CD4-positive, alpha-beta T cell (primary cell): ENCODE measurements at regions of chr1 and their contacts with region 1.

Region 1: GRCh38 chr1:28329395-28330153 is 734 bp downstream of the MED18 start:
- DNase-seq: peak in 10 of 14 experiments; percentile 17 to 73 (median 36)
- ATAC-seq: peak; percentile 21
- H3K4me3 ChIP-seq: peak overlapping the region; percentile 67
- H3K4me3 Mint-ChIP-seq: peak overlapping the region; percentile 94
- H3K27ac ChIP-seq: peak overlapping the region; percentile 90 to 93
- H3K27ac Mint-ChIP-seq: peak overlapping the region; percentile 88
- H3K4me1 ChIP-seq: peaks cover 25% of the 10 kb centered on the region
- H3K4me1 Mint-ChIP-seq: peaks cover 35% of the 10 kb centered on the region
- H3K27me3 ChIP-seq: no peaks in the 10 kb centered on the region
- H3K27me3 Mint-ChIP-seq: no peaks in the 10 kb centered on the region
- CTCF ChIP-seq: no peak

Region 2: DNA sequence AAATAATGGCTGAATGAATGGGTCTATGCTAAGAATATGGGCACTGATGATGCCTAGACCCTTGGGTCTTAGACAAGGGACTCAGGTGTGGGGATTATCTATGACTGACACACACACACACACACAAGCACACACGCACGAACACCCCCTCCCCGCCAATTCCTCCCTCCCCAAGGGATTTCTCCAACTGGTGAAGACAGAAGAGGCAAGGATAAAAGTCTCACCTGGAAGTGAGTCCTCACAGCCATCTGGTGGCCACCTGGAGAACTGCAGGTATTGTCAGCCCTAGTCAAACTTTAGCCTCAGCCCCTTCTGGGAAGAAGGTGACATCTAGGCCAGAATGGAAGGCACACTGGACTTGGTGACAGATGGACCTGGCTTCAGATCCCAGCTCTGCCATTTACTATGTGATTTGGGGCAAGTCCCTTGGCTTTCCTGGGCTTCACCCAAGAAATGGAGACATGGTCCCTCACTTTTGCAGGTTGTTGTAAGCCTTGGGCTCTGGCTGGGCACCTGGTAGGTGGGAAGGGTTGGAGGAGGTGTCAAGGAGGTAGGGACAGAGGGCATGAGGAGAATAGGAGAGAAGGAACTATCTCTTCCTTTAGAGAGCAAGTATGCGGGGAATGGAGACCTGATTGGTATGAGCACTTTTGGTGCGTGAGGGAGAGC is 941.1 kb before region 1 on chr1:
- CTCF ChIA-PET with region 1: no interaction called
- POLR2A ChIA-PET with region 1: no interaction called
- intact Hi-C with region 1: no loop called
- DNase-seq: peak; percentile 64 to 85 (median 71)
- ATAC-seq: peak; percentile 12
- H3K4me3 ChIP-seq: no peak overlapping the region
- H3K4me3 Mint-ChIP-seq: peak overlapping the region; percentile 2
- H3K27ac ChIP-seq: no peak overlapping the region
- H3K27ac Mint-ChIP-seq: no peak overlapping the region
- H3K4me1 ChIP-seq: peaks cover 28% of the 10 kb centered on the region
- H3K4me1 Mint-ChIP-seq: peaks cover 14% of the 10 kb centered on the region
- H3K27me3 ChIP-seq: no peaks in the 10 kb centered on the region
- H3K27me3 Mint-ChIP-seq: peaks cover 3% of the 10 kb centered on the region
- CTCF ChIP-seq: peak; percentile 79

Region 3: GRCh38 chr1:28235755-28236655 is 93.6 kb before region 1 on chr1 and contains the start of gene ATP5IF1:
- CTCF ChIA-PET with region 1: no interaction called
- POLR2A ChIA-PET with region 1: interaction called, 28 read pairs
- intact Hi-C with region 1: loop called in 1 of 2 experiments (anchors 5 kb)
- DNase-seq: peak; percentile 87 to 98 (median 92)
- ATAC-seq: peak; percentile 96
- H3K4me3 ChIP-seq: peak within 1 kb of the TSS; percentile 97
- H3K4me3 Mint-ChIP-seq: no peak within 1 kb of the TSS
- H3K27ac ChIP-seq: peak within 1 kb of the TSS; percentile 80 to 81
- H3K27ac Mint-ChIP-seq: no peak within 1 kb of the TSS
- H3K4me1 ChIP-seq: peaks cover 48% of the 10 kb centered on the region
- H3K4me1 Mint-ChIP-seq: peaks cover 19% of the 10 kb centered on the region
- H3K27me3 ChIP-seq: no peaks in the 10 kb centered on the region
- H3K27me3 Mint-ChIP-seq: no peaks in the 10 kb centered on the region
- CTCF ChIP-seq: no peak
- total RNA-seq, gene ATP5IF1: 77.4 to 78.0 TPM

Region 4: GRCh38 chr1:28359592-28360239 is 30.1 kb after region 1 on chr1:
- CTCF ChIA-PET with region 1: interaction called, 4 read pairs
- POLR2A ChIA-PET with region 1: interaction called, 11 read pairs
- intact Hi-C with region 1: no loop called
- DNase-seq: peak; percentile 54 to 83 (median 68)
- ATAC-seq: peak; percentile 75
- H3K4me3 ChIP-seq: no peak overlapping the region
- H3K4me3 Mint-ChIP-seq: no peak overlapping the region
- H3K27ac ChIP-seq: no peak overlapping the region
- H3K27ac Mint-ChIP-seq: no peak overlapping the region
- H3K4me1 ChIP-seq: no peaks in the 10 kb centered on the region
- H3K4me1 Mint-ChIP-seq: no peaks in the 10 kb centered on the region
- H3K27me3 ChIP-seq: no peaks in the 10 kb centered on the region
- H3K27me3 Mint-ChIP-seq: no peaks in the 10 kb centered on the region
- CTCF ChIP-seq: peak; percentile 85

Region 5: DNA sequence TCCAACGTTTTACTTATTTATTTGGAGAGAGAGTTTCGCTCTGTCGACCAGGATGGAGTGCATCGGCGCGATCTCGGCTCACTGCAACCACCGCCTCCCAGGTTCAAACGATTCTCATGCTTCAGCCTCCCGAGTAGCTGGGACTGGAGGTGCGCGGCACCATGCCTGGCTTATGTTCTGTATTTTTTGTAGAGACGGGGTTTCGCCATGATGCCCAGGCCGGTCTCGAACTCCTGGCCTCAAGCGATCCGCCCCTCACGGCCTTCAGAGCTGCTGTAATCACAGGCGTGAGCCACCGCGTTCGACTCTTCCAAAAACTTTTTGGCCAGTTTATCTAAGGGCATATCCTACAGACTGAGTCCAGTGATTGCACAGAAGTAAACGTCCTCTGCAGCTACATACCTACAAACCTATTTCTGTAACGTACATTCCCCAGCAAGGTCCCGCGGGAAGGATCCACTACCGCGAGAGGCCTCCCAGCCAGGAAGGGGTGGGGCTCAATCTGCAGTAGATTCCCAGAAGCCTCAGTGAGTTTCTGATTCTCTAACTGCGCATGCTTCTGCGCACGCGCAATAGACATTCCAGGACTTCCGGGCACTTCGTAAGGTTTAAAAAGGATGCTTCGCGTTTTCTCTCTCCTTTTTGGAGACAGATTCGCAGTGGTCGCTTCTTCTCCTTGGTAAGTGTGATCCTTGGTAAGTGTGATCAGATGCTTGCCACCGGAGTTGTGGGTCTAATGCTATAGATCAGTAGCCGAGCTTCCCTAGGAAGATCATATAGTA is 176.0 kb after region 1 on chr1 and contains the start of gene RCC1:
- CTCF ChIA-PET with region 1: no interaction called
- POLR2A ChIA-PET with region 1: interaction called, 16 read pairs
- intact Hi-C with region 1: no loop called
- DNase-seq: peak; percentile 86 to 99 (median 92)
- ATAC-seq: peak; percentile 92
- H3K4me3 ChIP-seq: peak within 1 kb of the TSS; percentile 86
- H3K4me3 Mint-ChIP-seq: peak within 1 kb of the TSS; percentile 94
- H3K27ac ChIP-seq: peak within 1 kb of the TSS; percentile 65 to 79
- H3K27ac Mint-ChIP-seq: peak within 1 kb of the TSS; percentile 88
- H3K4me1 ChIP-seq: peaks cover 38% of the 10 kb centered on the region
- H3K4me1 Mint-ChIP-seq: peaks cover 49% of the 10 kb centered on the region
- H3K27me3 ChIP-seq: no peaks in the 10 kb centered on the region
- H3K27me3 Mint-ChIP-seq: no peaks in the 10 kb centered on the region
- CTCF ChIP-seq: no peak
- total RNA-seq, gene RCC1: 8.5 to 9.9 TPM

Region 6: GRCh38 chr1:28648474-28649198 is 319.1 kb after region 1 on chr1 and contains the start of gene RNU11:
- CTCF ChIA-PET with region 1: no interaction called
- POLR2A ChIA-PET with region 1: interaction called, 20 read pairs
- intact Hi-C with region 1: no loop called
- DNase-seq: peak; percentile 77 to 97 (median 85)
- ATAC-seq: peak; percentile 67
- H3K4me3 ChIP-seq: peak within 1 kb of the TSS; percentile 50
- H3K4me3 Mint-ChIP-seq: peak within 1 kb of the TSS; percentile 78
- H3K27ac ChIP-seq: peak within 1 kb of the TSS; percentile 88 to 93
- H3K27ac Mint-ChIP-seq: peak within 1 kb of the TSS; percentile 96
- H3K4me1 ChIP-seq: peaks cover 36% of the 10 kb centered on the region
- H3K4me1 Mint-ChIP-seq: peaks cover 32% of the 10 kb centered on the region
- H3K27me3 ChIP-seq: no peaks in the 10 kb centered on the region
- H3K27me3 Mint-ChIP-seq: no peaks in the 10 kb centered on the region
- CTCF ChIP-seq: no peak
- total RNA-seq, gene RNU11: not detected